ENCODE measurements at regions of chr9 and their contacts with region 1.

Region 1: DNA sequence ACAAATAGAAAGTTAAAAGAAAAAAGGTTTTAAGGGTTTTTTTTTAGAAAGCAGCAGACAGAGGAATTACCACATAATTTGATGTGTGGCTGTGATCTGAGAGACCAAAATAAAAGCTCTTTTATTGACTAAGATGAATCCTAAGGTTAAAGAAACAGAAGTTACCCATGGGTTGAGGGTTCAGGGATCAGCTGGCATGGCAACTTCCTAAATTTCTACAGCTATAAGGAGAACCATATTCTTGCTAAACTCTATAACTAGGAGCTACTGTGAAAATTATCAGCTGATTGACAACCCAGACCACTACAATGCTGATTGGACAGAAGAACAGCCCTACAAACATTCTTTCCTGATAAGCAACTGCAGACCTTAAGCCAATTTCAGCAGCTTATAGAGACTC is 40.2 kb downstream of the TMEM215 start:
- DNase-seq: no peak
- H3K4me3 ChIP-seq: no peak overlapping the region
- H3K4me3 Mint-ChIP-seq: no peak overlapping the region
- H3K27ac Mint-ChIP-seq: no peak overlapping the region
- H3K4me1 ChIP-seq: no peaks in the 10 kb centered on the region
- H3K4me1 Mint-ChIP-seq: no peaks in the 10 kb centered on the region
- H3K27me3 ChIP-seq: no peaks in the 10 kb centered on the region; the same call in 1 of the 2 replicates
- H3K27me3 Mint-ChIP-seq: peaks cover 26% of the 10 kb centered on the region
- CTCF ChIP-seq: no peak

Region 2: GRCh38 chr9:32866273-32866672 is 42.7 kb after region 1 on chr9:
- CTCF ChIA-PET with region 1: no interaction called
- POLR2A ChIA-PET with region 1: no interaction called
- intact Hi-C with region 1: loop called (anchors 5 kb)
- DNase-seq: no peak
- H3K4me3 ChIP-seq: no peak overlapping the region
- H3K4me3 Mint-ChIP-seq: no peak overlapping the region
- H3K27ac Mint-ChIP-seq: no peak overlapping the region
- H3K4me1 ChIP-seq: no peaks in the 10 kb centered on the region
- H3K4me1 Mint-ChIP-seq: no peaks in the 10 kb centered on the region
- H3K27me3 ChIP-seq: no peaks in the 10 kb centered on the region; the same call in 1 of the 2 replicates
- H3K27me3 Mint-ChIP-seq: peaks cover 3% of the 10 kb centered on the region
- CTCF ChIP-seq: no peak